Activated CD4-positive, alpha-beta T cell treated with anti-CD3 and anti-CD28 coated beads, Interleukin-2, amount 10 ng/mL, durations not matched to agents 7 days and 5 days (primary cell): ENCODE measurements at regions of chr10 and their contacts with region 1.

Region 1: DNA sequence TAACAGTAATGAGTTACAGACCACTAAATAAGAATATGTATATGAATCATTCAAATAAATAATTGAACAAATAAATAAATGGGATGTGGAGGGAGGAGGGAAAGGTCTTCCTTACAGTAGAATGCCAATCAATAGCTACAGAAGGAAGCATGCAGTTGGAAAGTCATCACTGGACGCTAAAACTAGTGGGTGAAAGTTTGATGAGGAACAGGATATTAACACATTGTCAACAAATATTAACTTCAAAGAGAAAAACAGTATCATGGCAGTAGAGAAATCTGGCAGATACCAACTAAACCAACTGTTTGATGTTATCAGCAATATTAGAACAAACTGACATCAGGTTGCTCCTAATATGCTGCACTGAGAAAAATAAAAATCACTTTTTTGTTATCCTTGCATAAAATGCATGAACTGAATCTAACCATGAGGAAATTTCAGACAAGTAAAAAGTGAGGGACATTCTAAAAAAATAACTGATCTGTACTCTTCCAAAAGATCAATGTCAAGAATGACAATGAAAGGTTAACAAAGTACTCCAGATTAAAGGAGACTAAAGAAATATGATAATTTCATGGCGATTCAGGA is 94.1 kb downstream of the ZFAND4 start:
- DNase-seq: no peak
- H3K4me3 Mint-ChIP-seq: no peak overlapping the region
- H3K27ac Mint-ChIP-seq: no peak overlapping the region
- H3K4me1 Mint-ChIP-seq: peaks cover 30% of the 10 kb centered on the region
- H3K27me3 Mint-ChIP-seq: no peaks in the 10 kb centered on the region

Region 2: DNA sequence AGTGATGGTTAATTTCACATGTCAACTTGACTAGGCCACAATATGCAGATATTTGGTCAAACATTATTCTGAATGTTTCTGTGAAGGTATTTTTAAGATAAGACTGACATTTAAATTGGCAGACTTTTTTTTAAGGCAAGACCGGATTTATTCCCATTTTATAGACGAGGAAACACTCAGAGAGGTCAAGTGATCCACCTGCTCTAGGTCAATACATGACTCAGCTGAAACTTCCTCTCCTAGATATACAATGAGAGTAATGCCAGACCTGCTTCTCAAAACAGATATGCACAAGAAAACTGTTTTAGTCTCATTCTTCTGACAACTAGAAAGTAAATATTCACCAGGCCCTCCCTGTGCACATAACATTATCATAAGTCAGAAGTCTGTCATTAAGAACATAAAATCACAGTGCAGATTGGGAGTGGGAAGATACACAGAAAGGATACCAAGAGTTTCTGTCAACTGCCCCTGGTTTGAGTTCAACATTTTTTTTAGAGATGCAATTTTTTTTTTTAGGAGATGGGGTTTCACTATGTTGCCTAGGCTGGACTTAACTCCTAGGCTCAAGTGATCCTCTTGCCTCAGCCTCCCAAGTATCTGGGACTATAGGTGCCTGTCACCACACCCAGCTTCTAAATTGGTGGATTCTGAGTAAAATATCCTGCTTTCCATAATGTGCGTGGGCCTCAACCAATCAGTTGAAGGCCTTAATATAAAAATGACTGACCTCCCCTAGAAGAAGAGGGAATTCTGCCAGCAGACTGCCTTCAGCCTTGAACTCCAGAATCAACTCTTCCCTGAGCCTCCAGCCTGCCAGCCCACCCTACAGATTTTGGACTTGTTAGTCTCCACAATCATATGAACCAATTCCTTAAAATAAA is 27.3 kb before region 1 on chr10:
- CTCF ChIA-PET with region 1: no interaction called
- POLR2A ChIA-PET with region 1: no interaction called
- DNase-seq: no peak
- H3K4me3 Mint-ChIP-seq: no peak overlapping the region
- H3K27ac Mint-ChIP-seq: no peak overlapping the region
- H3K4me1 Mint-ChIP-seq: peaks cover 11% of the 10 kb centered on the region
- H3K27me3 Mint-ChIP-seq: no peaks in the 10 kb centered on the region

Region 3: DNA sequence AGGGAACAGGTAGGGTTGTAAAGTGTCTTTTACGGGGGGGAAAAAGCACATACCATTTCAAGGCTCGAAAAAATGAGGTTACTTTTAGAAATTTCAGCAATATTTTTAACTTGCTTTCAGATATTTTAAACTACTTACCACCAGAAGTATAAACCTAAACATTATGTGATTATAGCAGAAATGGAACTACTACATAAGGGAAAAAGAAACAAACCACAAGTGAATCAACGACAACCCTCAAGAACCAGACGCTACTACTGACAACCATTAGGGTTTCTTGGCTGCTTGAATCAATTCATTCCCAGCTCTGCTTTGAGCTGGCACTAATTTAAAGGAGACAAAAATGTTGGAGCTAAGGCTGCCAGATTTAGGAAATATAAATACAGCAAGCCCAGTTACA is 14.0 kb after region 1 on chr10:
- CTCF ChIA-PET with region 1: interaction called, 5 read pairs
- POLR2A ChIA-PET with region 1: interaction called, 10 read pairs
- DNase-seq: no peak
- H3K4me3 Mint-ChIP-seq: peak overlapping the region; percentile 54
- H3K27ac Mint-ChIP-seq: no peak overlapping the region
- H3K4me1 Mint-ChIP-seq: peaks cover 31% of the 10 kb centered on the region
- H3K27me3 Mint-ChIP-seq: peaks cover 3% of the 10 kb centered on the region